ENCODE measurements at regions of chr6 and their contacts with region 1.

Region 1: DNA sequence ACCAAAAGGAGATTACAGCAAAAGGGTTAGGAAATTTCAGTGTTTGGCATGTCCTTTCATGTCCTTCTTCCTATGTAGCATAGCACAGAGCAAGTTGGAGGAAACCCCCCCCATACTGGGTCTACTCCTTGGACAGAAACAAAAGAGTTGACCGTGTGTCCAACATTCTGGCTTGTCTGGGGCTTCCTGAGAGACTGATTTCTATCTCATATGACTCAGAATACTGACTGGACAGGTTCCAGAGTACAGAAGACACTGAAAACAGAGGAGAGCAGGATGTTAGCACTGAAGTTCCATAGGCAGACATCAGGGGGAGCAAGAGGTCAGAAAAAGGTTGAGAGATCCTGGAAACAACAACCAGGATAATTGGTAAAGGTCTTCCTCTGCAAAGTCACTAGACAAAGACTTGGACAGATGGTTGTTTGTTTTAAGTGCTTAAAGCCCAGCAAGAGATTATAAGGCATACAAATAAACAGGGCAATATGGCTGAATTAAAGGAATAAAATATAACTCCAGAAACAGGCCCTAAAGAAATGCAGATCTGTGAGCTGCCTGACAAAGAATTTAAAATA is 48.4 kb downstream of the USP49 start:
- DNase-seq: peak; percentile 66
- ATAC-seq: peak; percentile 96
- H3K4me3 Mint-ChIP-seq: no peak overlapping the region
- H3K27ac Mint-ChIP-seq: no peak overlapping the region
- H3K4me1 Mint-ChIP-seq: peaks cover 5% of the 10 kb centered on the region
- H3K27me3 Mint-ChIP-seq: no peaks in the 10 kb centered on the region
- CTCF ChIP-seq: peak; percentile 89

Region 2: DNA sequence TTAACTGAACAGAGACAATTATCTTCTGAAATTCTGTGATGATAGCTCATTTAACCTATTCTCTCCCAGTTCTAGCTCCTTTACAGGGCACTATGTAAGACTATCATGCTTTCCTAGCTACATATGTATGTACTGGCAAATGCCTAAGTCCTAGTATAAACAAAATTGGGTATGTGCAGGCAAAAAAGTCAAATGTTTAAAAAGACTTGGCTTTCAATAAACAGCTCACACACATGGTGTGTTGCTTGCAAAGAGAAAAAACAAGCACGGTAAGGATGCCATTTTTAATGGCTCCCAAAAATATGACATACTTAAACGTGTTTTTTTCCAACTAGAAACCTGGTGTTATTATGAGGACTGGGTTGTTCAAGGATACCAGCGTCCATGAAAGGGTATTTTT is 14.5 kb before region 1 on chr6:
- CTCF ChIA-PET with region 1: interaction called, 11 read pairs
- POLR2A ChIA-PET with region 1: no interaction called
- intact Hi-C with region 1: no loop called
- DNase-seq: no peak
- ATAC-seq: no peak
- H3K4me3 Mint-ChIP-seq: no peak overlapping the region
- H3K27ac Mint-ChIP-seq: no peak overlapping the region
- H3K4me1 Mint-ChIP-seq: peaks cover 4% of the 10 kb centered on the region
- H3K27me3 Mint-ChIP-seq: no peaks in the 10 kb centered on the region
- CTCF ChIP-seq: no peak

Region 3: DNA sequence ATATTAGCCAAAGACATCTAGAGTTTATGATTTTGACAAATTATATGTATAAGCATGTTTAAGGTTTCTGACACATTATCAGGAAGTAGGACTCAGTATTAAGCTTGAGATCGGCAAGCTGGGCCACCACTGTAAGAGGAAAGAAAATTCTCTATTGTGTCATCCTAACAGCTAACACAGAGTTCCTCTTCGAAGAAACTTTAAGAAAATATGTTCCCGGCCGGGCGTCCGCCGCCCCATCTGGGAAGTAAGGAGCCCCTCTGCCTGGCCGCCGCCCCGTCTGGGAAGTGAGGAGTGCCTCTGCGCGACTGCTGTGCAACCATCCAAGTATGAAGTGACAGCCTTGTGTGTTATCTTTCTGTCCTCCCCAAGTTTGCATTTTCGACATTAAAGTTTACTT is 25.4 kb after region 1 on chr6:
- CTCF ChIA-PET with region 1: interaction called, 14 read pairs
- POLR2A ChIA-PET with region 1: no interaction called
- intact Hi-C with region 1: no loop called
- DNase-seq: no peak
- ATAC-seq: no peak
- H3K4me3 Mint-ChIP-seq: no peak overlapping the region
- H3K27ac Mint-ChIP-seq: no peak overlapping the region
- H3K4me1 Mint-ChIP-seq: no peaks in the 10 kb centered on the region
- H3K27me3 Mint-ChIP-seq: no peaks in the 10 kb centered on the region
- CTCF ChIP-seq: no peak

Region 4: DNA sequence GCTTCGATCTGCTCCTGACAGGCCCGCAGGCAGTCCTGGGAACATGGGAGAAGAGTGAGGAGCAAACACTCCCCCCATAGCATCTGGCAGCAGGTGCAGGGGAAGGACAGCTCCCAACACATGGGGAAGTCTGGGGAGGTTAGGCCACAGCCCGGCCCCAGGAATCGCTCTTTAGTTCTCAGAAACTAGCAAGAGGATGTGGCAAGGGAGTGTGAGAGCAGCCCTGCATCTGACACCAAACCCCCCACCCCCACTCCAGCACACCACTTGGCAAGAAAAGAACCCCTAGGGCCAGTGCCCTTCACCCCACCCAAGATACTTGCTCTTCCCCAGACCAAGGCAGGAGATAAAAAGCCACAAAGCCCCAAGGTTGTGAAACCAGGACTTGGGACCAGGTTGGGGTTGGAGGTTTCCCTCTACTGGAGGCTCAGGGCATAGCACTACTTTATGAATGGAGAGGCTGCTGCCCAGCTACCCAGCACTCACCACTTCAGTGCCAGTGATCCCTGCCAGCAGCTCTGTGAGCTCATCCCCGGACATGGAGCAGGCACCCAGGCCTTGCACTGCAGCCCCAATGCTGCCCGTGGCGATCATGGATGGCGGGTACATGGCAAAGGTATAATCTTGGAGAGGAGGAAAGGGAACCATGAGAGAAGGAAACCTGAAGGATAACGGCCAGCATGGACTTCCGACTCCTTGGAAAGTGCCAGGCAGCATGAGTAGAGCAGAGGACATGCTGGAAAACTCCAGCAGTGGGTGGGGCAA is 89.5 kb after region 1 on chr6:
- CTCF ChIA-PET with region 1: interaction called, 5 read pairs
- POLR2A ChIA-PET with region 1: no interaction called
- intact Hi-C with region 1: loop called (anchors 5 kb)
- DNase-seq: peak; percentile 97
- ATAC-seq: peak; percentile 83
- H3K4me3 Mint-ChIP-seq: peak overlapping the region; percentile 90
- H3K27ac Mint-ChIP-seq: peak overlapping the region; percentile 91
- H3K4me1 Mint-ChIP-seq: peaks cover 50% of the 10 kb centered on the region
- H3K27me3 Mint-ChIP-seq: no peaks in the 10 kb centered on the region
- CTCF ChIP-seq: peak; percentile 86

Measured in activated CD8-positive, alpha-beta T cell treated with anti-CD3 and anti-CD28 coated beads for 36 hours (primary cell).